ENCODE measurements at regions of chr1 and their contacts with region 1.

Region 1: DNA sequence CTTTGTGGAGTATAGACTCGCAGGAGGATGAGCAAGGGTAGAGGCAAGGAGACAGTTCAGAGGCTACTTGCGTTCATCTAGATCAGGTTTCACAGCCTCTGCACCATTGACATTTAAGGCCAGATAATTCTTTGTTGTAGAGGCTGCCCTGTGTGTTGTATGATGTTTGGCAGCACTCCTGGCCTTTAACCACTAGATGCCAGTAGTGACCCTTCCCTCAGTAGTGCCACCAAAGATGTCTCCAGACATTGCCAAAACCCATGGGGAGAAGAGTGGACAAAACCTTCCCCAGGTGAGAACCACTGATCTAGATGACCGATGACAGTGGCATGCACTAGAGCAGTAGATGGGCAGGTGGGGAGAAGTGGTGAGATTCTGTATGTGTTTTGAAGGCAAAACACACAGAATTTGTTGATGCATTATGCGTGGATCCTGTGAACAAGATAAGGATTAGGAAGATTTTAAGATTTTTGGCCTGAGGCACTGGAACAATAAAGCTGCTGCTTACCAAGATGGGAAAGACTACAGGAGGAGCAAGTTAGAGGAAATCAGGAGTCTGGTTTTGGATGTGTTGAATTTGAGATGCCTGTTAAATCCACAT is 9.9 kb upstream of the COG2 start:
- DNase-seq: peak; percentile 52
- ATAC-seq: peak; percentile 95
- H3K4me3 ChIP-seq: no peak overlapping the region
- H3K27ac ChIP-seq: no peak overlapping the region
- H3K4me1 ChIP-seq: no peaks in the 10 kb centered on the region
- H3K27me3 ChIP-seq: peaks cover 4% of the 10 kb centered on the region; the same call in 1 of the 2 replicates
- CTCF ChIP-seq: peak; percentile 82 to 87 (median 83)
- POLR2A ChIP-seq: no peak
- RAD21 ChIP-seq: peak; percentile 92

Region 2: GRCh38 chr1:230753586-230754251 is 121.3 kb after region 1 on chr1:
- CTCF ChIA-PET with region 1: no interaction called
- POLR2A ChIA-PET with region 1: no interaction called
- RAD21 ChIA-PET with region 1: no interaction called
- intact Hi-C with region 1: no loop called
- DNase-seq: peak; percentile 3
- ATAC-seq: peak; percentile 85
- H3K4me3 ChIP-seq: no peak overlapping the region
- H3K27ac ChIP-seq: no peak overlapping the region
- H3K4me1 ChIP-seq: peaks cover 3 to 13% of the 10 kb centered on the region in 2 experiments; a peak in 3 of 4 replicates
- H3K27me3 ChIP-seq: no peaks in the 10 kb centered on the region
- CTCF ChIP-seq: no peak
- POLR2A ChIP-seq: no peak
- RAD21 ChIP-seq: no peak

Region 3: DNA sequence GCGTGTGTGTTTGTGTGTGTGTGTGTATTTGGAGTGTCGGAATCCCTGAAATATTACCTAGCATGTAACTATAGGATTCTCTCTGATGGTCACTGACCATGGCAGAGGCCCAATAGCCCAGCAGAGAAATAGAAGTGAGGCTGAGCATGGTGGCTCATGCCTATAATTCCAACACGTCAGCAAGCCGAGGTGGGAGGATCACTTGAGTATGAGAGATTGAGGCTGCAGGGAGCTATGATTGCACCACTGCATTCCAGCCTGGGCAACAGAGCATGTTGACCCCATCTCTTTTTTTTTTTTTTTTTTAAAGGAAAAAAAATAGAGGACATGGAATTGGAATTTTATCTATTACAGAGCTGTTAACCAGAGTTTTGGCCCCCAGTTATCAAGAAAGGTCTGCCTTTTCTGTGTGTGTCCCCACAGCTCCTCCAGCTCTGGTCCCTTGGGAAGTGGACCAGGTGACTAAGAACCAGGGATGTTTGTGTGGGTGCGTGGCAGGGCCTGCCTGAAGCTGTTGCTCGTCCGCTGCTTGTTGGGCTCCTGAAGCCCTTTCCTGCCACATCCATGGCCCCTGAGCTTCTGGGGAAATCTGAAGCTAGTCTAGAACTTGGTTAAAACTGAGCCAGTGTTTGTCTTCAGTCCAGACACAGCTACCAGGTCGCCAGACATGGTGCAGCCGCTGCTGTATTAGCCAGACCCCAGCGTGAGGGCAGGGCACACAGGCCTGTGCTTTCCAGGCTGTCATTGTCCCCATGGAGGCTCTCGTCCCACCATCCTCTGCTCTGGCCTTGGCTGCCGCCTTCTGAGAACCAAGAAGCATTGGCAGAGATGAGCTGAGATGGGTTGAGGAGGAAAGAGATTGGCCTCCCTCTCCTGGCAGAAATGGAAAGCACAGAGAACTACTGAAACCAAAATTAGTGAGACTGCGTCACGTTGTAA is 140.4 kb after region 1 on chr1:
- CTCF ChIA-PET with region 1: no interaction called
- POLR2A ChIA-PET with region 1: no interaction called
- RAD21 ChIA-PET with region 1: interaction called in 1 of 2 experiments, 3 read pairs
- intact Hi-C with region 1: loop called (anchors 1 kb)
- DNase-seq: no peak
- ATAC-seq: peak; percentile 80
- H3K4me3 ChIP-seq: no peak overlapping the region
- H3K27ac ChIP-seq: no peak overlapping the region
- H3K4me1 ChIP-seq: no peaks in the 10 kb centered on the region
- H3K27me3 ChIP-seq: peaks cover 1% of the 10 kb centered on the region; the same call in 1 of the 2 replicates
- CTCF ChIP-seq: peak; percentile 41 to 57 (median 42); a peak in 5 of 6 replicates
- POLR2A ChIP-seq: no peak
- RAD21 ChIP-seq: peak; percentile 79

Region 4: GRCh38 chr1:230792691-230793665 is 160.6 kb after region 1 on chr1:
- CTCF ChIA-PET with region 1: no interaction called
- POLR2A ChIA-PET with region 1: no interaction called
- RAD21 ChIA-PET with region 1: no interaction called
- intact Hi-C with region 1: loop called (anchors 1 kb)
- DNase-seq: no peak
- ATAC-seq: no peak
- H3K4me3 ChIP-seq: no peak overlapping the region
- H3K27ac ChIP-seq: no peak overlapping the region
- H3K4me1 ChIP-seq: no peaks in the 10 kb centered on the region
- H3K27me3 ChIP-seq: no peaks in the 10 kb centered on the region
- CTCF ChIP-seq: peak in 2 of 3 experiments; percentile 15 to 20; a peak in 1 of 6 replicates
- POLR2A ChIP-seq: no peak
- RAD21 ChIP-seq: peak; percentile 61

Measured in HCT116 (cell line).